Transverse colon (tissue), 4 donors: ENCODE measurements at regions of chr14 and their contacts with region 1.

Region 1: DNA sequence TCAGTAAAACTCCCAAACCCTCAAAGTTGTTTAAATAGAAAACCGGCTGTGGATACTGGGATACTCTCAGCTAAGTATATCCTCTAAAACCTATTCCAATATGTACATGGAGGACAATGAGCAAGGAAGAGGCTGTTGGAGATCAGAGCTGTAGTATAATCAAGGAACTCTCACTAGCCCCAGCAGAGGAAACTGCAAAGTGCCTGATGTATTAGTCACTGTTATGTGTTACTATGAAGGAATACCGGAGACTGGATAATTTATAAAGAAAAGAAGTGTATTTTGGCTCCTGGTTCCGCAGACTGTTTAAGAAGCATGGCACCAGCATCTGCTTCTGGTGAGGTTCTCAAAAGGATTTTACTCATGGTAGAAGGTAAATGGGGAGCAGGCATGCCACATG is 65.6 kb upstream of the RPL10L start:
- DNase-seq: no peak
- H3K4me3 ChIP-seq: no peak overlapping the region
- H3K27ac ChIP-seq: no peak overlapping the region
- H3K4me1 ChIP-seq: no peaks in the 10 kb centered on the region
- H3K27me3 ChIP-seq: no peaks in the 10 kb centered on the region
- CTCF ChIP-seq: no peak
- EP300 ChIP-seq: no peak
- POLR2A ChIP-seq: no peak

Region 2: DNA sequence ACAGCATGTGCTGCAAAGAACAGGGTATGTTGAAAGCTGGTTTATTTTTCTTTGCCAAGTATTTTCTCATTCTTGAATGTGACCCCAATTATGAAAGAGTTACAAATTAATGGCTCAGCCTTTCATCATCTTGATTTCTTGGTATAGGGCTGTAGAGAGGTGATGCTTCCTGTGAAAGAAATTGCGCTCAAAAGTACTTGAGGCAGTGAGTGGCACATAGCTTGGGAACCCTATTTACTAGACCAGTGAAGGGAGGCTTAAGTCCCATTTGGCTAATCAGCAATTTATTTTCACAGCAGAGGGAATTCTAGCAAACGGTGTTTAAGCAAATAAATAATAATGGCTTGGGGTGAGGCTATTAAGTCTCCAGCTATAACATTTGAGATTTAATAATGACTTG is 1310.3 kb before region 1 on chr14:
- in situ Hi-C with region 1: no loop called
- intact Hi-C with region 1: loop called (anchors 5 kb)
- DNase-seq: no peak
- H3K4me3 ChIP-seq: no peak overlapping the region
- H3K27ac ChIP-seq: no peak overlapping the region
- H3K4me1 ChIP-seq: no peaks in the 10 kb centered on the region
- H3K27me3 ChIP-seq: no peaks in the 10 kb centered on the region
- CTCF ChIP-seq: no peak
- EP300 ChIP-seq: no peak
- POLR2A ChIP-seq: no peak

Region 3: DNA sequence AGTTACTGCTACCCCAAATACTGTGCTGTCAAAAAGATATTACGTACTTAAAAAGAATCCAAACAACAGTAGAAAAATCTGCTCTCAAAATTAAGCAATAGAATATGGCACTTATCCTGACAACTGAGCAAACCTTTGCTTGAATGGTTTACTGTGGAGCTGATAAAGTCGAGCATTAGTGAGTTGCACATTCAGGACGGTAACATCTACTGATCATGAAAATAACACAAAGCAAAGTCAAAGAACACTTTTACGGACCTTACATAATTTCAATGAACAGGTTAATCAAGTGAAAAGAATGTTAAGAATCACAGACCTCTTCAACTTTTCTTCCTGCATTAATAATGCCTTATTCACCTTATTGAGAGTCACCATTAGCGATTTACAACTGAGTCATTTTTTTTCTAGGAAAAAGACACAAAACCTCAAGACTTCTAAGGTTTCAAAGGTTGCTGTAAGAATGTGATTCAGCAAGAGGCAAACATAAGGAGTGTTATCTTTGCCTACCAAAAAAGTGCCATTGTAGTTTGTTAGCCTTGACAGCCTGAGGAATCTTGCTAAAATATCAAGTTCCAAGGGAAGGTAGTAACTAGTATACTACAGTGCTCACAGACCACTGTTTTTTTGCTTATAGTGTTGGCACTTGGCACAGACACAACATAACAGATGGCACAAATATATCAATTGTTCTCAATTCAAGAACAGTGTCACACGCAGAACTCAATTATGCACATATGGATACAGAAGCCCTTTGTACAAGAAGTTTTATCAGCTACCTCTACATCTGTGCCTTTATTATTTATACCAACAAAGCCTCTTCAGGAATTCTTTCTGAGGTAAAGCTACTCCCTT is 268.5 kb after region 1 on chr14:
- in situ Hi-C with region 1: no loop called
- intact Hi-C with region 1: no loop called
- DNase-seq: no peak
- H3K4me3 ChIP-seq: no peak overlapping the region
- H3K27ac ChIP-seq: no peak overlapping the region
- H3K4me1 ChIP-seq: no peaks in the 10 kb centered on the region
- H3K27me3 ChIP-seq: no peaks in the 10 kb centered on the region
- CTCF ChIP-seq: no peak
- EP300 ChIP-seq: no peak
- POLR2A ChIP-seq: no peak